A673 (cell line): ENCODE measurements at regions of chr12 and their contacts with region 1.

Region 1: GRCh38 chr12:44930972-44931600 is 55.0 kb upstream of the NELL2 start:
- DNase-seq: peak; percentile 96
- H3K4me3 ChIP-seq: no peak overlapping the region
- H3K27ac ChIP-seq: peak overlapping the region; percentile 81
- H3K4me1 ChIP-seq: peaks cover 27% of the 10 kb centered on the region
- H3K27me3 ChIP-seq: no peaks in the 10 kb centered on the region
- CTCF ChIP-seq: peak; percentile 67

Region 2: DNA sequence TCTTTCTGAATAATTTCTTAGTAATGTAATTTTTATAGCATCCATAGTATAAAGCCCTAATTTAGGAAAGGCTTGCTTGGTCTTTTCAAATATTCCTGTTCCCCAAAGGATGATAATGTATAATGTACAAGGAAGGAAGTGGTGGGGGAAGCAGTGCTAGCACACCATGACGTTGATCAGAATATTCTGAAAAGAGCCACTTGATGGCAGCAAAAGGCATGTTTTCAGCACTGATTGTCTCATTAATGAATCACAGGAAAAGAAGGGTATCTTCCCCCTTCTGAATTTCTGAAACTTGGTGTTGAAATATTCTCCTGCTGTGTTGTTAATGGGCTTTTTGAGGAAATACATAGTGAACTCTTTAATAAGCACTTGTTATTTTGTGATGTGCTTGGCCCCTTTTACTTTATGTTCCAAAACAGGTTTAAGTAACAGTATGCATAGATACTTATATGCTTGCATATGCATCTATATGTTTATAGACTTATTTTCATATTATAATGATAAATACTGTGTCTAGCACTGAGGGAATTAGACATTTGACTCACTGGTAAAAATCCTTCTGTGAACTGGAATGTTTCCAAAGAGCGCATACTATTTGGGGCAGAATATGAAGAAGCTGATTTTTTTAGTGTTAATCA is 973.2 kb before region 1 on chr12:
- CTCF ChIA-PET with region 1: no interaction called
- POLR2A ChIA-PET with region 1: no interaction called
- intact Hi-C with region 1: loop called (anchors 2 kb)
- DNase-seq: peak; percentile 93
- H3K4me3 ChIP-seq: no peak overlapping the region
- H3K27ac ChIP-seq: peak overlapping the region; percentile 72
- H3K4me1 ChIP-seq: peaks cover 24% of the 10 kb centered on the region
- H3K27me3 ChIP-seq: no peaks in the 10 kb centered on the region
- CTCF ChIP-seq: peak; percentile 71